ENCODE measurements at regions of chr16 and their contacts with region 1.

Region 1: GRCh38 chr16:70653809-70654771 is 7.7 kb downstream of the IL34 start:
- DNase-seq: peak; percentile 83
- ATAC-seq: peak; percentile 84
- H3K4me3 ChIP-seq: peak overlapping the region; percentile 55
- H3K27ac ChIP-seq: no peak overlapping the region
- H3K4me1 ChIP-seq: no peaks in the 10 kb centered on the region
- H3K27me3 ChIP-seq: no peaks in the 10 kb centered on the region
- CTCF ChIP-seq: peak; percentile 90

Region 2: DNA sequence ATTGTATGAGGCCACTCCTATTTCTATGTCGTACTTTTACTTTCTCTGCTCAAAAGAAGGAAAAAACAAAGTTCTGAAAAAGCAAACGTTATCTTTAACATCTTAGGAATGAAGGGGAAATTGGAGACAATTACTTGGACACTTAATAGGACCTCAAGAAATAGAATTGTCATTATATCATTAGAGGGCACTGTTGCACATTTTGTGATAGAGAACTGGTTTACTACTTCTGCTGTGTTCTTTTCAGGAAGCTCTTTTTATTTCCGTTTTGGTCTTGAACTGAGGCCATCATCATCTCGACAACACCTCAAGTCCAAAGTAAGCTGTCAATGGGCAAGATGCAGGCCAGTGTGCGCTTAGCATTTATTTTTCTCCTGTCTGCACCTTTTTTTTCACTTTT is 145.3 kb before region 1 on chr16:
- CTCF ChIA-PET with region 1: no interaction called
- POLR2A ChIA-PET with region 1: no interaction called
- intact Hi-C with region 1: loop called (anchors 5 kb)
- DNase-seq: peak; percentile 44
- ATAC-seq: 0 out of 2 replicates have a peak, but pooled peaks have one; percentile 43
- H3K4me3 ChIP-seq: no peak overlapping the region
- H3K27ac ChIP-seq: no peak overlapping the region
- H3K4me1 ChIP-seq: 0 out of 2 replicates have a peak, but pooled peaks cover 13% of the 10 kb centered on the region
- H3K27me3 ChIP-seq: no peaks in the 10 kb centered on the region
- CTCF ChIP-seq: peak; percentile 55

Region 3: GRCh38 chr16:70529051-70529777 is 124.9 kb before region 1 on chr16:
- CTCF ChIA-PET with region 1: no interaction called
- POLR2A ChIA-PET with region 1: no interaction called
- intact Hi-C with region 1: loop called (anchors 5 kb)
- DNase-seq: peak; percentile 66
- ATAC-seq: peak; percentile 37
- H3K4me3 ChIP-seq: no peak overlapping the region
- H3K27ac ChIP-seq: no peak overlapping the region
- H3K4me1 ChIP-seq: peaks cover 24% of the 10 kb centered on the region
- H3K27me3 ChIP-seq: no peaks in the 10 kb centered on the region
- CTCF ChIP-seq: peak; percentile 67

Region 4: GRCh38 chr16:70576431-70577255 is 77.4 kb before region 1 on chr16:
- CTCF ChIA-PET with region 1: no interaction called
- POLR2A ChIA-PET with region 1: no interaction called
- intact Hi-C with region 1: loop called (anchors 5 kb)
- DNase-seq: peak; percentile 22
- ATAC-seq: peak; percentile 43
- H3K4me3 ChIP-seq: no peak overlapping the region
- H3K27ac ChIP-seq: no peak overlapping the region
- H3K4me1 ChIP-seq: peaks cover 6% of the 10 kb centered on the region; the same call in 1 of the 2 replicates
- H3K27me3 ChIP-seq: no peaks in the 10 kb centered on the region
- CTCF ChIP-seq: no peak

Region 5: DNA sequence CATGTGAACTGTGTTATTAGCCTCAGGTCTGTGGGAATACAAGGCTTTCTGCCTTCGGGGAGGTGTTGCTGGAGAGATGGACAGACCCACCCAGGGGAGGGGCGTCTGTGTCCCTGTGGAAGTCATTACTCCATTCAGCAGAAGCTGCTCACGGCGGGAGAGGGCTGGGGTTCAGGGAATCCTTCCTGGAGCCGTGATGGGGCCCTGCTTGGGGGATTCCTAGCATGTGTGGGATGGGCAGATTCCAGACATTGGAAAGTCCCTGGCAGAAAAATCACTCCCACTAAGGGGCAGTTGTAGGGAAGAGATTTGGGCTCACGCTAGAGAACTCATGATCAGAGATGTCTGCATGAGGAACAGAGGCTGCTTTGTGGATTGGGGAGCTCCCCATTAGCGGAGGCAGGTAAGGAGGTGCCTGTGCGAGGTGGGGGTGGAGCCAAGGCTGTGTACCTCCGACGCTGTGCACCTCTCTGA is 64.1 kb before region 1 on chr16:
- CTCF ChIA-PET with region 1: no interaction called
- POLR2A ChIA-PET with region 1: no interaction called
- intact Hi-C with region 1: no loop called
- DNase-seq: no peak
- ATAC-seq: no peak
- H3K4me3 ChIP-seq: no peak overlapping the region
- H3K27ac ChIP-seq: no peak overlapping the region
- H3K4me1 ChIP-seq: 0 out of 2 replicates have a peak, but pooled peaks cover 3% of the 10 kb centered on the region
- H3K27me3 ChIP-seq: no peaks in the 10 kb centered on the region
- CTCF ChIP-seq: no peak

Region 6: DNA sequence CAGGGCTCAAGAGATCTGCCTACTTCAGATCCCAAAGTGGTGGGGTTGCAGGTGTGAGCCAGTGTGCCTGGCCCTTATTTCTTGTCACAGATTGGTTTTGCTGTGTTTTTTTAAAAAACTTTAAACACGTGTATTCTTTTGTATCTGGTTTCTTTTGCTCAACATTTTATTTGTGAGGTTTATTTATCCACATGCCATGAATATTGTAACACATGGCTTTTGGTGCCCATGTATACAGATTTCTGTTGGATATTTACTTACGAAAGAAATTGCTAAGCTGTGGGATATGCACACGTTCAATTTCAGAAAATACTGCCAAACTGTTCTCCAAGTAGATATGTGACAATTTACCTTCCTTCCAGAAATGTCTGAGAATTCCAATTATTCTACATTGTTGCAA is 26.4 kb before region 1 on chr16:
- CTCF ChIA-PET with region 1: no interaction called
- POLR2A ChIA-PET with region 1: no interaction called
- intact Hi-C with region 1: loop called (anchors 1 kb)
- DNase-seq: no peak
- ATAC-seq: no peak
- H3K4me3 ChIP-seq: no peak overlapping the region
- H3K27ac ChIP-seq: no peak overlapping the region
- H3K4me1 ChIP-seq: no peaks in the 10 kb centered on the region
- H3K27me3 ChIP-seq: no peaks in the 10 kb centered on the region
- CTCF ChIP-seq: no peak